Naive thymus-derived CD4-positive, alpha-beta T cell (primary cell): ENCODE measurements at regions of chr6 and their contacts with region 1.

Region 1: GRCh38 chr6:225121-225721 is 67.1 kb upstream of the DUSP22 start:
- DNase-seq: peak in 8 of 9 donors; percentile 2 to 73 (median 20)
- ATAC-seq: peak; percentile 79
- H3K4me3 ChIP-seq: peak overlapping the region; percentile 6
- H3K4me3 Mint-ChIP-seq: peak overlapping the region; percentile 66 to 87 (median 80)
- H3K27ac ChIP-seq: no peak overlapping the region
- H3K27ac Mint-ChIP-seq: peak overlapping the region in 8 of 9 donors; percentile 56 to 99 (median 88)
- H3K4me1 ChIP-seq: peaks cover 20 to 21% of the 10 kb centered on the region in 2 donors
- H3K4me1 Mint-ChIP-seq: peaks cover 11 to 74% (median 29%) of the 10 kb centered on the region in 7 donors
- H3K27me3 ChIP-seq: no peaks in the 10 kb centered on the region
- H3K27me3 Mint-ChIP-seq: no peaks in the 10 kb centered on the region

Region 2: GRCh38 chr6:209432-210103 is 15.7 kb before region 1 on chr6:
- CTCF ChIA-PET with region 1: no interaction called
- POLR2A ChIA-PET with region 1: no interaction called
- intact Hi-C with region 1: no loop called
- DNase-seq: no peak
- ATAC-seq: peak; percentile 56
- H3K4me3 ChIP-seq: peak overlapping the region; percentile 48
- H3K4me3 Mint-ChIP-seq: peak overlapping the region in 7 of 10 donors; percentile 5 to 64 (median 59)
- H3K27ac ChIP-seq: no peak overlapping the region
- H3K27ac Mint-ChIP-seq: peak overlapping the region in 1 of 9 donors; percentile 61
- H3K4me1 ChIP-seq: peaks cover 0 to 9% of the 10 kb centered on the region in 2 donors
- H3K4me1 Mint-ChIP-seq: peaks cover 0 to 34% (median 6%) of the 10 kb centered on the region in 7 donors
- H3K27me3 ChIP-seq: no peaks in the 10 kb centered on the region
- H3K27me3 Mint-ChIP-seq: peaks cover 0 to 16% (median 0%) of the 10 kb centered on the region in 5 donors

Region 3: DNA sequence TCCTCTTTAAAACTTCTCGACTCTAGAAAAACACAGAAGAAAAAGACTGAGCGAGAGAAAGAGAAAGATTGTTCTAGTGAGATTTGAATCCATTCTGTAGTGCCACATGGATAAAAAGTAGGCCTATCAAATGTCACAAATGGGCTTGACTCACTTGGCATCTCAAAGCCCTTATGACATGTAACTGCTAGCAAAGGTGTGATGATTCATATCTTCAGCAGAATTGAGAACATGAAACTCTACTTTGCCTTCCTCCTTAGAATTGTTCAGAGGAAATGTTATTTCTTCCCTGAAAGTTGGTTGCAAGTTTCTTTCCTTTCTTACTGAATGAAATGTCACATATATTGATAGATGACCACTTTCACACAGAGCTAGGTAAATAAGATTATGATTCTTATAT is 26.7 kb after region 1 on chr6:
- CTCF ChIA-PET with region 1: interaction called, 3 read pairs
- POLR2A ChIA-PET with region 1: no interaction called
- intact Hi-C with region 1: loop called in 1 of 2 experiments (anchors 2 kb)
- DNase-seq: no peak
- ATAC-seq: peak; percentile 32
- H3K4me3 ChIP-seq: no peak overlapping the region
- H3K4me3 Mint-ChIP-seq: peak overlapping the region in 1 of 10 donors; percentile 3
- H3K27ac ChIP-seq: no peak overlapping the region
- H3K27ac Mint-ChIP-seq: peak overlapping the region in 2 of 9 donors; percentile 44 to 77
- H3K4me1 ChIP-seq: peaks cover 7 to 11% of the 10 kb centered on the region in 2 donors
- H3K4me1 Mint-ChIP-seq: peaks cover 19 to 36% (median 32%) of the 10 kb centered on the region in 7 donors
- H3K27me3 ChIP-seq: no peaks in the 10 kb centered on the region
- H3K27me3 Mint-ChIP-seq: no peaks in the 10 kb centered on the region